A549 (cell line): ENCODE measurements at regions of chr12 and their contacts with region 1.

Region 1: DNA sequence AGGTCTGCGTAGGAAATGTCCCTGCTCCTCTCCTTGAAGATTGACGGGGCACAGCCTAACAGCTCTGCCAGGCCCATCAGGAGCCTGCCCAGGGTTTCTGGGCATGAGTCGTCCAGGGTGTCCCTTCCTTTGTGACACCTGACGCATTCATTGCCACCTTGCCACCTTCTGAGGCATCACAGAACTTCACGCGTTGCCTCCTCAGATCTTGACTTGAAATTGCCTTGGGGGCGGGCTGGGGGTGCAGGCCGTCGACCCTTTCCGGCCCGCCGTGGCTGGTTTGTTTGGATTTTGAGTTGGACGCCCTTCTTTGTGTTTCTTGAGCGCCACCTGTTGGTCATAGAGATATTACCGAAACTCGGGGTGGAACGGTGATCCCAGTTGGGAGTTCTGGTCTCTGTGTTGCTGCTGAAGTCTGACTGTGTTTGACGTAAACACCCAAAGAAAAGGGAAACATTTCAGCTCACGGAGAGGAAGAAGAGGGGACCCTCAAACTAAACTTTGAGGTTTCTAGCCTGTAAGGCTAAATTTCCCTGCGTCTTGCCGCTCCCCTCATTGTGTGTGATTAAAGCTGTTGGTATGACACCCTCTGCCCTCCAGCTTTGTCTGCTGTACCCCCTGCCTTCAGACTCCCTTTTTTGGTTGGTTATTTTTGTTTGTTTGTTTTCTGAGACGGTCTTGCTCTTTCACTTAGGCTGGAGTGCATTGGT is 44.6 kb downstream of the MLXIP start:
- DNase-seq: peak; percentile 76
- ATAC-seq: peak; percentile 67 to 72
- H3K4me3 ChIP-seq: no peak overlapping the region
- H3K27ac ChIP-seq: peak overlapping the region; percentile 58 to 83; a peak in 5 of 6 replicates
- H3K4me1 ChIP-seq: peaks cover 37% of the 10 kb centered on the region
- CTCF ChIP-seq: peak; percentile 92
- EP300 ChIP-seq: no peak
- POLR2A ChIP-seq: no peak
- RAD21 ChIP-seq: peak; percentile 95

Region 2: DNA sequence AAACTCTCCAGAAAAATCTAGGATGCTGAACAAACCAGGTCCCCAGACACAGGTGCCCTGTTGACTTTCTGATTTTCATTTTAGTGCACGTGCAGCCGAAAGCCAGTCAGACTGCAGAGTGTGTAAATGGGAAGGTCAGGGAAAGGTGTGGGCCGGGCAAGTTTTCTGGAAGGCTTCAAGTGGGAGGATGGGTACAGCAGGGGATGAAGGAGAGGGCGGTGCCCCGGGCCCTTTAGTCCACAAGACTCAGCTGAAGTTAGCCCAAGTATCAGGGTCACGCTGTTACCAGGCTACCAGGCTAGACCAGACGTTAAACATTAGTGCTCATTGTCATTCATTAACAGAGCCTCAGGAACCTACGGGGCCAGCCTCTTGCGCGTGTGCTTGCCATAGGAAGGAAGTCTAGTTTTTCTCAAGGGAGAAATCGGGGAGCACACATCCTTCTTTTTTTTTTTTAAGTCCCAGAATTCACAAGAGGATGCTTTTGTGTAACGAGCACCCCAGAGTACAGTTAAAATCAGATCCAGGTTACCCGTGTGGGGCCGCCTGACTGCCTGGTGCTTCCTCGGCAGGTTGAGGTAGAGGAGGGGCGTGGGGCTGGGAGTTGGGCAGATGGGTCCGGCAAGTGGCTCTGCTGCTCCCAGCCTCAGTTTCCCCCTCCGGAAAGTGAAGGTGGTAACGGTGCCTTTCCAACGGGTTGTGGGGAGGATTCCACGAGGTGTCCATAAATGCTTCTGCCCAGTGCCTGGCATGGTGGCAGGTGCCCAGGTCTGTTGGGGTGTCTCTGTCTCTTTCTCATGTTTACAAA is 82.4 kb before region 1 on chr12:
- CTCF ChIA-PET with region 1: interaction called, 22 read pairs
- POLR2A ChIA-PET with region 1: no interaction called
- DNase-seq: peak; percentile 95 to 98
- ATAC-seq: peak; percentile 98 to 99
- H3K4me3 ChIP-seq: no peak overlapping the region
- H3K27ac ChIP-seq: peak overlapping the region; percentile 84 to 96
- H3K4me1 ChIP-seq: peaks cover 27% of the 10 kb centered on the region
- CTCF ChIP-seq: no peak
- EP300 ChIP-seq: no peak
- POLR2A ChIP-seq: no peak
- RAD21 ChIP-seq: no peak

Region 3: GRCh38 chr12:122084857-122085405 is 38.3 kb before region 1 on chr12:
- CTCF ChIA-PET with region 1: interaction called, 41 read pairs
- POLR2A ChIA-PET with region 1: no interaction called
- DNase-seq: no peak
- ATAC-seq: no peak
- H3K4me3 ChIP-seq: no peak overlapping the region
- H3K27ac ChIP-seq: no peak overlapping the region
- H3K4me1 ChIP-seq: peaks cover 54% of the 10 kb centered on the region
- CTCF ChIP-seq: no peak
- EP300 ChIP-seq: no peak
- POLR2A ChIP-seq: no peak
- RAD21 ChIP-seq: no peak

Region 4: DNA sequence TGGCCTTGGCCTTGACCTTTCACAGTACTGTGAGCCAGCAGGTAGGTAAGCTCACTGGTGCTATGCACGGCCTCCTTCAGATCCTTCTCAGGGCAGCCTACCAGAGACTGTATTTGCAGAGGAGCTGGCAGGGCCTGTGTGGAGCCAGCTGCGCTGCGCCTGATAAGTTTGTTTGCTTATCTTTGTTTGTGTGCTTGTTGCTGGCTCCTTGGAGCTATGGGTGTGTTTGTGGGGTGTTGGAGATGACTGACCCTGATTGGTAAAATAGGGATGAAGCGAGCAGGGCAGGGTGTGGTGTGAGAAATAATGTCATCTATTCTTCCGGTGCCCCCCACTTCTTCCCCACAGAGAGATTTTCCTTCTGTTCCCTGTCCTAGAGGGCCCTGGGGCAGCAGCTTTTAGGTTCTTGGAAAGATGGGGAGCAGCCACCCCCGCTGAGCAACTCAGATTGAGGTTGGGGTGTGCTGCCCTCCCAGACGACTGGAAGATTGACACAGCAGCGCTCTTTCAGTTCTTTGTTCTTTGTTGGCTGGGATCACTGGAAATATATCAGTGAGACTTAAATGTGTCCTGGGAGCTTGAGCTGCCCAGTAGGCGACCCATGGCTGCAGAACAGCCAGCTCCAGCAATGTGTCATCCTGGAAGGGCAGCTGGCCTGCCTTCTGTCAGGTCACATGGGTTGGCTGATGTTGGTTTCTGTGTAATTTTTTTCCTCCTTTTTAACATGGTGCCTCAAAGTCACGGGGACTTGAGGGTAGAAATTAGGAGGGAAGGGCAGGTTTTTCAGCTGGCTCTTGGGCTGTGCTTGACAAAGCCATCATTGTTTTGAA is 25.1 kb before region 1 on chr12:
- CTCF ChIA-PET with region 1: interaction called, 120 read pairs
- POLR2A ChIA-PET with region 1: no interaction called
- DNase-seq: peak; percentile 66 to 92
- ATAC-seq: peak; percentile 86 to 93
- H3K4me3 ChIP-seq: 0 out of 3 replicates have a peak overlapping the region, but pooled peaks have one; percentile 12
- H3K27ac ChIP-seq: peak overlapping the region; percentile 81 to 88
- H3K4me1 ChIP-seq: peaks cover 63% of the 10 kb centered on the region
- CTCF ChIP-seq: no peak
- EP300 ChIP-seq: no peak
- POLR2A ChIP-seq: no peak
- RAD21 ChIP-seq: no peak

Region 5: GRCh38 chr12:122137681-122138080 is 14.5 kb after region 1 on chr12:
- CTCF ChIA-PET with region 1: interaction called, 20 read pairs
- POLR2A ChIA-PET with region 1: no interaction called
- DNase-seq: no peak
- ATAC-seq: peak; percentile 31 to 63; a peak in 3 of 6 replicates
- H3K4me3 ChIP-seq: no peak overlapping the region
- H3K27ac ChIP-seq: no peak overlapping the region
- H3K4me1 ChIP-seq: no peaks in the 10 kb centered on the region
- CTCF ChIP-seq: no peak
- EP300 ChIP-seq: no peak
- POLR2A ChIP-seq: no peak
- RAD21 ChIP-seq: no peak